HepG2 (cell line): ENCODE measurements at regions of chr11 and their contacts with region 1.

Region 1: DNA sequence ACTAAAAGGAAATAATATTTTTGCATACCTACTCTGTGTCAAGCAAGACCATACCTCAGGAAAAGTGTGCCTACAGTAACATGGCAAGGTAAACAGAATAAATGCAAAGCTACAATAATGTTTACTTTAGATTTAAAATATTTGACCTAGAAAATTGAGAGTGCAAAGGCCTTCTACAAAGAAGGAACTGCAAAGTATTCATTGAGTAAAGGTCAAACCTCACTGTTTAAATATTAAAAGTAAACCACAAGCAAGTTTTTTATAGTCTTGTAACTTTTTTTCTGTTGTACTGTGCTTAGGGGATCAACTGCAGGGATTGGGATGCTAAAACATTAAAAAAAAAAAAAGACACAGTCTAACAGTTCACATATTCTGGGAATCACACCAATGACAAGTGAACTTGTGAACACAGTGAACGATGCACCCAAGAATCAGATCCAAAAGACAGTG is 48.8 kb downstream of the CWF19L2 start:
- DNase-seq: peak; percentile 89
- ATAC-seq: peak; percentile 98
- H3K4me3 ChIP-seq: peak overlapping the region in 2 of 3 experiments; percentile 9 to 41; a peak in 2 of 6 replicates
- H3K27ac ChIP-seq: peak overlapping the region; percentile 75
- H3K4me1 ChIP-seq: peaks cover 53% of the 10 kb centered on the region
- H3K27me3 ChIP-seq: no peaks in the 10 kb centered on the region
- CTCF ChIP-seq: no peak
- EP300 ChIP-seq: peak; percentile 8 to 88; a peak in 2 of 4 replicates
- POLR2A ChIP-seq: no peak
- RAD21 ChIP-seq: no peak

Region 2: GRCh38 chr11:107301886-107302285 is 106.9 kb before region 1 on chr11:
- CTCF ChIA-PET with region 1: no interaction called
- POLR2A ChIA-PET with region 1: no interaction called
- in situ Hi-C with region 1: no loop called
- intact Hi-C with region 1: loop called (anchors 5 kb)
- DNase-seq: no peak
- ATAC-seq: no peak
- H3K4me3 ChIP-seq: no peak overlapping the region
- H3K27ac ChIP-seq: no peak overlapping the region
- H3K4me1 ChIP-seq: no peaks in the 10 kb centered on the region
- H3K27me3 ChIP-seq: no peaks in the 10 kb centered on the region
- CTCF ChIP-seq: no peak
- EP300 ChIP-seq: no peak
- POLR2A ChIP-seq: no peak
- RAD21 ChIP-seq: no peak

Region 3: DNA sequence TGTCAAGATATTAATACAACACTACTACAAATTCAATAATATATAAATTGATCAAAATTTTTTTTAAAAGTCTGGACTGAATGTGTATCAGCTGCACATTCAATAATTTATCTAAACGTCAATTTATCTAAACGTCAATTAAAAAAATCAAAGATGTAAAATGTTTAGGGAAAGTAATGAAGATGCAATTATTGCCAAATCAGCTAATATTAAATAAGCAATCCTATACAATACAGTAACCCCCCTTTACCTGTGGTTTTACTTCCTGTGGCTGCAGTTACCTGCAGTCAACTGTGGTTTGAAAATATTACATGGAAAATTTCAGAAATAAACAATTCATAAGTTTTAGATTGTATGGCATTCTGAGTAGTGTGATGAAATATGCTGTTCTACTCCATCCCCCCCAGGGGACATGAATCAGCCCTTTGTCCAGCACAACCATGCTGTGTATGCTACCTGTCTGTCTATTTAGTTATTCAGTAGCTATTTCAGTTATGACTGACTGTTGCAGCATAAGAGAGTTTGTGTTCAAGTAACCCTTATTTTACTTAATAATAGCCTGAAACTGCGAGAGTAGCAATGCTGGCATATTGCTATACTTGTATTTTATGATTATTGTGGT is 23.3 kb before region 1 on chr11:
- CTCF ChIA-PET with region 1: no interaction called
- POLR2A ChIA-PET with region 1: interaction called, 8 read pairs
- in situ Hi-C with region 1: no loop called
- intact Hi-C with region 1: loop called (anchors 1 kb)
- DNase-seq: peak; percentile 88
- ATAC-seq: peak; percentile 100
- H3K4me3 ChIP-seq: no peak overlapping the region; a peak in 1 of 6 replicates
- H3K27ac ChIP-seq: peak overlapping the region; percentile 57
- H3K4me1 ChIP-seq: peaks cover 19% of the 10 kb centered on the region
- H3K27me3 ChIP-seq: no peaks in the 10 kb centered on the region
- CTCF ChIP-seq: no peak
- EP300 ChIP-seq: peak in 1 of 2 experiments; percentile 56; a peak in 2 of 4 replicates
- POLR2A ChIP-seq: no peak
- RAD21 ChIP-seq: no peak

Region 4: GRCh38 chr11:107397357-107397756 is 11.4 kb before region 1 on chr11:
- CTCF ChIA-PET with region 1: no interaction called
- POLR2A ChIA-PET with region 1: no interaction called
- in situ Hi-C with region 1: no loop called
- intact Hi-C with region 1: no loop called
- DNase-seq: no peak
- ATAC-seq: no peak
- H3K4me3 ChIP-seq: no peak overlapping the region
- H3K27ac ChIP-seq: no peak overlapping the region
- H3K4me1 ChIP-seq: peaks cover 8% of the 10 kb centered on the region
- H3K27me3 ChIP-seq: no peaks in the 10 kb centered on the region
- CTCF ChIP-seq: no peak
- EP300 ChIP-seq: no peak
- POLR2A ChIP-seq: no peak
- RAD21 ChIP-seq: no peak

Region 5: GRCh38 chr11:107446822-107447431 is 38.1 kb after region 1 on chr11:
- CTCF ChIA-PET with region 1: no interaction called
- POLR2A ChIA-PET with region 1: no interaction called
- in situ Hi-C with region 1: no loop called
- intact Hi-C with region 1: loop called (anchors 5 kb)
- DNase-seq: no peak
- ATAC-seq: no peak
- H3K4me3 ChIP-seq: no peak overlapping the region
- H3K27ac ChIP-seq: no peak overlapping the region
- H3K4me1 ChIP-seq: peaks cover 9% of the 10 kb centered on the region
- H3K27me3 ChIP-seq: no peaks in the 10 kb centered on the region
- CTCF ChIP-seq: no peak
- EP300 ChIP-seq: no peak
- POLR2A ChIP-seq: no peak
- RAD21 ChIP-seq: no peak